ENCODE measurements at regions of chr16 and their contacts with region 1.

Region 1: GRCh38 chr16:81403616-81404373 is 40.8 kb upstream of the CMIP start:
- DNase-seq: peak; percentile 82 to 90 (median 87)
- H3K4me3 ChIP-seq: peak overlapping the region in 1 of 3 experiments; percentile 10
- H3K4me3 Mint-ChIP-seq: peak overlapping the region in 1 of 2 donors; percentile 12
- H3K27ac ChIP-seq: no peak overlapping the region
- H3K27ac Mint-ChIP-seq: peak overlapping the region in 1 of 7 donors; percentile 13
- H3K4me1 ChIP-seq: peaks cover 5 to 8% of the 10 kb centered on the region in 2 donors
- H3K4me1 Mint-ChIP-seq: peaks cover 5% of the 10 kb centered on the region
- H3K27me3 ChIP-seq: no peaks in the 10 kb centered on the region
- H3K27me3 Mint-ChIP-seq: peaks cover 4 to 9% (median 5%) of the 10 kb centered on the region in 3 donors
- CTCF ChIP-seq: peak; percentile 90

Region 2: DNA sequence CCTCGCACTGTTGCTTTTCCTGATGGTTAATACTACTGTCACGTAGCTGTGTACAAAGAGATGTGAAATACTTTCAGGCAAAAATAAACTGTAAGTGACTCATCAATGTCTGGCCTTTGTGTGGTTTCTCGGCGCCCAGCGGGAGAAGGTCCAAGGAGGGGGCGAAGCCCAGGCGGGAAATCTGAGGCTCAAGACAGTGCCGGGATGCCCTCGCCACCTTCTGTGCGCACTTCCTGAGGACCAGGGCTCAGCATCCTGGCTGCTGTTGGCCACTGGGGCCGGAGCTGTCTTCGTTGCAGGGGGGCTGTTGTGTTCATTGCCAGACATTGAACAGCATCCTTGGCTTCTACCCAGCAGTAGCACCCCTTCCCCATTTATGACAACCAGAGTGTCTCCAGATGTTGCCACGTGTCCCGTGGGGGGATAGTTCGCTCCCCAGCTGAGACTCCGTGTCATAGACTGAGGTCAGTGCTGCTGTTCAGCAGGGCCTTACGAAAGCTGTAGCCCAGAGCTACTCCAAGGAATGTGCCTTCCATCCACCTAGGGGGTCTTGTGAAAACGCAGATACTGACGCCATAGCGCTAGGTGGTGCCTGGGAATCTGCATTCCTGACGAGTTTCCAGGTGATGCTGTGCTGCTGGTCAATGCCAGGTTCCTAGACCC is 308.0 kb after region 1 on chr16:
- intact Hi-C with region 1: loop called (anchors 10 kb)
- DNase-seq: peak in 2 of 3 donors; percentile 12 to 25
- H3K4me3 ChIP-seq: no peak overlapping the region
- H3K4me3 Mint-ChIP-seq: no peak overlapping the region
- H3K27ac ChIP-seq: no peak overlapping the region
- H3K27ac Mint-ChIP-seq: peak overlapping the region in 3 of 7 donors; percentile 17 to 39 (median 27)
- H3K4me1 ChIP-seq: peaks cover 0 to 3% of the 10 kb centered on the region in 2 donors
- H3K4me1 Mint-ChIP-seq: peaks cover 13% of the 10 kb centered on the region
- H3K27me3 ChIP-seq: no peaks in the 10 kb centered on the region
- H3K27me3 Mint-ChIP-seq: peaks cover 0 to 5% (median 1%) of the 10 kb centered on the region in 3 donors
- CTCF ChIP-seq: no peak